ENCODE measurements at regions of chr12 and their contacts with region 1.

Region 1: GRCh38 chr12:94721173-94721572 is 70.8 kb upstream of the TMCC3 start:
- DNase-seq: peak; percentile 64
- CTCF ChIP-seq: no peak

Region 2: DNA sequence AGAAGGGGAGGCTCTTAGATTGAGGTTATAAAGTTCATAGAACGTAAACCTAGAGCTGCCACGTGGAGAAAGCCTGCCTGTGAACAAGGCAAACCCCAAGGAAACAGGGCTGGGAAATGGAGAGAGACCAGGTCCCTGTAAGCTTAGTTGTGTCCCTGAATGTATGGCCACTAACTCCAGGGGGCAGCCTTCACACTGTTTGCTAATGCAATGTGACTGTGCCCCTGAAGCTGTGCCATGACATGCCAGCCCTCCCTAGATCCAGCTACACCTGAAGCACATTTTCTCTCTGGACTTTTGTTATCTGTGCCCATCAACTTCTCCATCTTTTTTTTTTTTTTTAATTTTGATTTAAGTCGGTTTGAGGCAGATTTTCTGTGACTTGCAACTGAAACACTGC is 10.2 kb before region 1 on chr12:
- CTCF ChIA-PET with region 1: interaction called, 17 read pairs
- POLR2A ChIA-PET with region 1: no interaction called
- DNase-seq: peak; percentile 34
- CTCF ChIP-seq: no peak